ENCODE measurements at regions of chr11 and their contacts with region 1.

Region 1: DNA sequence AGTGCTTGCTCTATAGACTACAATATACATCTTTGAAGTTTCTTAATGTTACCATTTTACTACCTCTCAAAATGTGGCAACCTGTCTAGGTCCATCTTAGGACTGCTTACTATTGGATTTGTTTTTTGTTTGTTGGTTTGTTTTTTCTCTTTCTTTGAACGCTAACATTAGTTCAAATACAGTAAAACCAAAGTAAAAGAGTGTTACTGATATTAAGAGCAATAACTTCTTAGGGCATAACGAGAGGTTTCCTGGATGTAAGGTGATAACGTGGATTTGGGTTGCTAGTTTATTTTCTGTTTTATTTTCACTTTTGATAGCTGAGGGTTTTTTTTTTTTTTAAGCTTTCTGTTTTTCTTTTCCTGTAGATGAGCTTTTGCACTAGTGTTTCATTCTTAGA is 43.6 kb downstream of the TMEM135 start:
- DNase-seq: no peak
- H3K4me3 Mint-ChIP-seq: peak overlapping the region; percentile 81
- H3K27ac Mint-ChIP-seq: peak overlapping the region; percentile 92
- H3K4me1 Mint-ChIP-seq: peaks cover 23% of the 10 kb centered on the region
- H3K27me3 Mint-ChIP-seq: no peaks in the 10 kb centered on the region

Region 2: DNA sequence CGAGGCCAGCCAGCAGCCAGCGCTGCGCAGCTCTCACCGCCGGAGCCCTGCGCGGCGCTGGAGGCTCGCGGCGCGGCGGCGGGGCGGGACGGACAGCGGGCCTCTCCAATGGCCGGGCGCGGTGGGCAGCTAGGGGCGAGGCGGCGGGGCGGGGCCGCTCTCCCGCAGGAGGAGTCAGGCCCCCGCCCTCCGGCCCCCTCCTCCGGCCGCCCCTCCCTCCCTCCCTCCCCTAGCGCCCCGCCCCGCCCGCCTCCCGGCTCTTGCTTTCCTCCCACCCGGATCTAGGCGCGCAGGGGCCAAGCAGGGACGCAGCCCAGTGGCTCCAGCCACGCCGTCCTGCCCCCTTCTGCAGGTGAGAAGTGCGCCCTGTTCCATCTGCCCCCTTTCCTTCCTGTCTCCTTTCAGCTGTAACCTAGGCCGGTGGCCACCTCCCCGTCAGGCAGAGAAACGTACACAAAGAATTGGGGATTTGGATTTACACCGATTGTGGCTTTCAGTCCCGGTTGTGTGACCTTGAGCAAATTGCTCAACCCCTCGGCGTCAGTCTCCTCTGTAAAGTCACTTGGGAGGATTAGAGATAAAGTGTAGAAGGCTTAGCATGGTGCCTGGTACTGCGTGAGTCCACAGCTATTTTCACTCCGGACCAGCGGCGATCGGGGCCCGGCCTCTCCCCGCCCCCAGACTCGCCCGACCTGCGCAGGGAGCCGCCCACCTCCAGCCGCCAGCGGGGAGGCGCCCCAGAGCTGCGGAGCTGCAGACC is 125.8 kb before region 1 on chr11 and contains the start of gene FZD4:
- intact Hi-C with region 1: loop called (anchors 10 kb)
- DNase-seq: peak; percentile 85
- H3K4me3 Mint-ChIP-seq: peak within 1 kb of the TSS; percentile 90
- H3K27ac Mint-ChIP-seq: no peak within 1 kb of the TSS
- H3K4me1 Mint-ChIP-seq: peaks cover 7% of the 10 kb centered on the region
- H3K27me3 Mint-ChIP-seq: peaks cover 72% of the 10 kb centered on the region
- total RNA-seq, gene FZD4: 0.02 TPM in 1 of 2 replicates, not detected in the other

Region 3: DNA sequence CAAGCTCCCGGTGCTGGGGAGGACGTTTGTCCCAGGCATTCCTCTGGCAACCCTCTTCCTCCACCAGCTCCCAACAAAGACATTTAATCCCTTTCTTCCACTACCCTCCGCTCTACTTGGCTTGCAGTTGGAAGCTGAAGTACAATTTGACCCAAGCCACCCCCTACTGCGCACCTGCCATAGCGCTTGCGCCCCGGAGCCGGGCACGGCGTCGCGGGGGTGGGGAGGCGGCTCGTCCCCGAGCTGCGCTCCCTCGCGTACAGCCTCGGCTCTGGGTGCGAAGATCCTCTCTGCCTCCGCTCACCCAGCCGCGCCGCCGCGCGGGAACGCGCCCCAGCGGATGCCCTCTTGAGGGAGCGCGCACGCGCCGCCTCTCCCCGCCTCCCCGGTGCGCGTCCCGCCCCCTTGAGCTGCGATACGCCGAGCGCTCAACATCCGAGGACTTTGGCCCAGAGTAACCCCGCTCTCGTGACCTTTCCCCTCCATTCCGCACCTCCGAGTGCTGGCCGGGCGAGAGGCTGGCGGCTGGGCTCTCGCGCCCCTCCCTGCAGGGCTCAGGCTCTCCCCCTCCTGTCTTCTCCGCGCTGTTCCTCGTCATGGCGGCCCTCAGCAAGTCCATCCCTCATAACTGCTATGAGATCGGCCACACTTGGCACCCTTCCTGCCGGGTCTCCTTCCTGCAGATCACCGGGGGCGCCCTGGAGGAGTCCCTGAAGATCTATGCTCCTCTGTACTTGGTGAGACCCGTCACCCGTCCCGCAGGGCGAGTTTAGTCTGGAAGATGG is 43.7 kb before region 1 on chr11 and contains the start of gene TMEM135:
- intact Hi-C with region 1: loop called (anchors 1 kb)
- DNase-seq: peak; percentile 99
- H3K4me3 Mint-ChIP-seq: peak within 1 kb of the TSS; percentile 96
- H3K27ac Mint-ChIP-seq: peak within 1 kb of the TSS; percentile 93
- H3K4me1 Mint-ChIP-seq: peaks cover 51% of the 10 kb centered on the region
- H3K27me3 Mint-ChIP-seq: peaks cover 14% of the 10 kb centered on the region
- total RNA-seq, gene TMEM135: 26.2 and 28.6 TPM in 2 replicates

Region 4: DNA sequence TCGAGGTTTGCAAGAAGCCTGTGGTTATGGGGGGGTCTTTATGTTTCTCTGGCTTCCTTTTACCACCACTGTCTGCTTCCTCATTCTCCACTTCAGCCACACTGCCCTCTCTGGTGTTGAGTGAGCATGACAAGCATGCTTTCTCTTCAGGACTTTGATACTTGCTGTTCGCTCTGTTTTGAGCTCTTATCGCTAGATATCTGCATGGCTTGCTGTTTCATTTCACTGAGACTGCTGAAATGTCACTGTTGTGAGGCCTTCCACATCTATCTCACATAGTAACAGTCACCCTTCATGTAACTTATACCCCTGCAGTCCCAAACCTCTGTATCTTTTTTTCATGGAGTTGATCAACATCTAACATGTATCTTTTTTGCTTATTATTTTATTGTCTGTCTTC is 16.2 kb after region 1 on chr11:
- intact Hi-C with region 1: loop called (anchors 2 kb)
- DNase-seq: peak; percentile 82
- H3K4me3 Mint-ChIP-seq: no peak overlapping the region
- H3K27ac Mint-ChIP-seq: no peak overlapping the region
- H3K4me1 Mint-ChIP-seq: peaks cover 6% of the 10 kb centered on the region
- H3K27me3 Mint-ChIP-seq: no peaks in the 10 kb centered on the region

Region 5: DNA sequence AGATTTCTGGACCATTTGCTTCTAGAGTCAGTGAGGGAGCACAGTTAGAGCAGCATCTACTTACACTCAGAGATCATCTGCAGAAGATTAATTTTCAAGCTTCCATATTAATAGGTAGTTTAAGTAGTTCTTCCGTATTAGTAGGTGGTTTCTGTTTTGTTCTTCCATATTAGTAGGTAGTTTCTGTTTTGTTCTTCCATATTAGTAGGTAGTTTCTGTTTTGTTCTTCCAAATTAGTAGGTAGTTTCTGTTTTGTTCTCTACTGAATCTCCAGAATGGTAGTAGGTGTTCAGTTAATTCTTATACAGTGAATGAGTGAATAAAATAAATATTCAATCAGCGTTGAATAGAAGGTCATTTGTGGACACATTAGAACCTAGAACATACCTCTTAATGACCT is 132.1 kb after region 1 on chr11:
- intact Hi-C with region 1: loop called (anchors 10 kb)
- DNase-seq: no peak
- H3K4me3 Mint-ChIP-seq: peak overlapping the region; percentile 11
- H3K27ac Mint-ChIP-seq: no peak overlapping the region
- H3K4me1 Mint-ChIP-seq: peaks cover 14% of the 10 kb centered on the region
- H3K27me3 Mint-ChIP-seq: no peaks in the 10 kb centered on the region

Region 6: GRCh38 chr11:87252869-87253268 is 171.5 kb after region 1 on chr11:
- intact Hi-C with region 1: loop called (anchors 5 kb)
- DNase-seq: no peak
- H3K4me3 Mint-ChIP-seq: no peak overlapping the region
- H3K27ac Mint-ChIP-seq: peak overlapping the region; percentile 68
- H3K4me1 Mint-ChIP-seq: peaks cover 14% of the 10 kb centered on the region
- H3K27me3 Mint-ChIP-seq: no peaks in the 10 kb centered on the region

Measured in activated CD4-positive, alpha-beta T cell treated with anti-CD3 and anti-CD28 coated beads, Interleukin-2, amount 10 ng/mL, durations not matched to agents 24 days and 14 days (primary cell).